Activated T-helper 2 cell treated with anti-CD3 and anti-CD28 coated beads, Interferon-gamma antibody, Interleukin-2, Interleukin-4, amounts not matched to agents 10 μg/mL and 5 μg/mL and 100 μg/mL, durations not matched to agents 14 hours and 24 hours and 36 hours (primary cell): ENCODE measurements at regions of chr1 and their contacts with region 1.

Region 1: GRCh38 chr1:53182111-53182593 is 14.5 kb upstream of the CPT2 start:
- DNase-seq: peak; percentile 71
- H3K4me3 Mint-ChIP-seq: no peak overlapping the region
- H3K27ac Mint-ChIP-seq: no peak overlapping the region
- H3K4me1 Mint-ChIP-seq: no peaks in the 10 kb centered on the region
- H3K27me3 Mint-ChIP-seq: peaks cover 9% of the 10 kb centered on the region

Region 2: DNA sequence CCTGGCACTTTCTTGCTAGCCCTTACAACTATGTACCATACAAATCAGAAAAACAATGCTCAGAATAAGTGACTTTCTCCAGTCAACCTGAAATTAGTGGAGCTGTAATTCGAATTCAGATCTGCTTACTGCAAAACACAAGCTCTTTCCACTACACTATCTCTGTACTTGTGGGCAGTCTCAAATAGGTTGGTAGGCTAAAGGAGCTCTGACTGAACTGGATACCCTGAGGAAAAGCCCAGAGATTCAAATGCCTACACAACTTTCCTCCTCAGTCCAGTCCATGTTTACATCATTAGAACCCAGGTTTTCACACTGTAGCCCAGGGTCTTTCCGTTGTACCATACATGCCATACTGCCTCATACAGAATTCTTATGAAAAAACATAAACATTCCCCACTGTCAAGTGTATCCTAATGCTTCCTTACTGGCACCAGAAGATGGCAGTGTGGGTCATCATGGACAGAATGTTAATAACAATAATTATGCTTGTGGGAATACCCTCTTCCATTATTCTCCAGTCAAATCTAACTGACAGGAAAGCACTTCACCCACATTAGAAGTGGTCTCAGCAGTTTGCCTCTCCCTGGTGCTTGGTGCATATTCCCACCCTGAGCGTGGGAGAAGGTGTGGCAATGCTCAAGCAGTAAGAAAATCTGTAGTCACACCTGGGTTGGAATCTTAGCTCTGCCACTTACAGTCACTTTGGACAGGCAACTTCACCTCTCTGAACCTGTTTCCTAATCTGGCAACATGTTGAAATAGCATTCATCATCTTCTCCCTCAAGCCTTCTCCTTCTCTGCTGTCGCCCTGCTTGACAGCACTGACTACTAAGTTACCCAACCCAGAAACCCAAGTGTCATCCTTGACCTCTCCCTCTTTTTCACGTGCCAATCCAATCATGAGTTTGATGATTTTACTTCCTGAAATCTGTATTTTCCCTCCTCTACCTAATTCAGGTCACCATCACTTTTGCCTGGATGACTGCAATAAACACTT is 1054.7 kb before region 1 on chr1:
- intact Hi-C with region 1: loop called (anchors 5 kb)
- DNase-seq: no peak
- H3K4me3 Mint-ChIP-seq: no peak overlapping the region
- H3K27ac Mint-ChIP-seq: no peak overlapping the region
- H3K4me1 Mint-ChIP-seq: peaks cover 4% of the 10 kb centered on the region
- H3K27me3 Mint-ChIP-seq: peaks cover 37% of the 10 kb centered on the region

Region 3: DNA sequence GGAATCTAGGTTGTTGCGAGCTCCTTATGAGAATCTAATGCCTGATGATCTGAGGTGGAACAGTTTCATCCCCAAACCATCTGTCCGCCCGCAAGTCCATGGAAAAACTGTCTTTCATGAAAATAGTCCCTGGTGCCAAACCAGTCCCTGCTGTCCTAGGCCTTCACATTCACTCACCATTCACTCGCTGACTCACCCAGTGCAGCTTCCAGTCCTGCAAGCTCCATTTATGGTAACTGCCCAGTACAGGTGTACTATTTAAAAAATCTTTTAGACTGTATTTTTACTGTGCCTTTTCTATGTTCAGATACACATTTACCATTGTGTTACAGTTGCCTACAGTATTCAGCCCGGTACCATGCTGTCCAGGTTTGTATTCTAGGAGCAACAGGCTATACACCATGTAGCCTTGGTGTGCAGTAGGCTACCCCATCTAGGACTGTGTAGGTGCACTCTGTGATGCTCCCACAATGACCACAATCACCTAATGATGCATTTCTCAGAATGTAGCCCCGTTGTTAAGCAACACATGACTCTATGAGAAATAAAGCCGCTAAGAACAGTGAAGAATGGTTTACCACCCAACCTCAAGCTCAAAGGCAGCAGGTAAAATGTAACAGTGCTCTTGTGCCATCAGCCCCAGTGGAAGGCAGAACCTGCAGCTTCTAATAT is 263.0 kb before region 1 on chr1:
- intact Hi-C with region 1: loop called (anchors 5 kb)
- DNase-seq: no peak
- H3K4me3 Mint-ChIP-seq: no peak overlapping the region
- H3K27ac Mint-ChIP-seq: no peak overlapping the region
- H3K4me1 Mint-ChIP-seq: peaks cover 19% of the 10 kb centered on the region
- H3K27me3 Mint-ChIP-seq: no peaks in the 10 kb centered on the region

Region 4: GRCh38 chr1:53001128-53001527 is 181.0 kb before region 1 on chr1:
- intact Hi-C with region 1: no loop called
- DNase-seq: no peak
- H3K4me3 Mint-ChIP-seq: no peak overlapping the region
- H3K27ac Mint-ChIP-seq: no peak overlapping the region
- H3K4me1 Mint-ChIP-seq: no peaks in the 10 kb centered on the region
- H3K27me3 Mint-ChIP-seq: no peaks in the 10 kb centered on the region

Region 5: DNA sequence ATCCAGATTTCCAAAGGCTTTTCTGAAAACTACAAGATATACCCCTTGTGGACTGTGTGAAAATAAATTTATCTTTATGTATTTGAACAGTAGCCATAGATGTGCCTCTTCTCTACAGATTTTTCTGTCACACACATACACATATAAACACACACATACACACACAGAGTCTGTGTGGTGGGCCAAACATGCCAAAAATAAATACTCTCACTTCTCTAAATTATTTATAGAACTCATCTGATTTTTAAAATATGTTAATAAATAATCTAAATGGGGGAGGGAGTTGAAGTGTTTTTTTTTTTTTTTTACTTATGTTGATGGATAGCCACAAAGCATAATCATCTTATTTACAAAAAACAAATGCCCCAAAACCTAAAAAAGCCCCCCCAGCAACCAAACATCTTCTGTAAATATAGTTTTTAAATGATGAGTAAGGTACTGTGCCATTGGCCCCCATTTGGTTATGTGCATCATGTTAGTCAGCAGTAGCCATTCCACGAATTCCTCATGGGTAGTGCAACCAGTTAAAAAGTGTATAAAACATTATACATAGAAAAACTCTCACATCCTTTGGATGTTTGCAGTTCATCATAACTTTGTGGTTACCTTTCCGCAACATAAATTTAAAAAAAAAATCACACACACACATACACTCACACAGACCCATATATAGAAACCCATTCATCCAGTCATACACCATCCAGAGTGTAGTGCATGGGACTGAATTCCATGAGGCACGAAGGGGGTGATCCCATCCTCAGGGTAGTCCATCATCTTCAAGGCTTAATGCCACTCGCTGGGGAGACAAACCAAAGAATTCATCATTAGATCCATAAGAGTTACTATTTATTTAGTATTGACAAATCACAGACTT is 64.3 kb after region 1 on chr1:
- intact Hi-C with region 1: no loop called
- DNase-seq: no peak
- H3K4me3 Mint-ChIP-seq: no peak overlapping the region
- H3K27ac Mint-ChIP-seq: no peak overlapping the region
- H3K4me1 Mint-ChIP-seq: no peaks in the 10 kb centered on the region
- H3K27me3 Mint-ChIP-seq: no peaks in the 10 kb centered on the region